CD4-positive, alpha-beta memory T cell (primary cell): ENCODE measurements at regions of chr2 and their contacts with region 1.

Region 1: DNA sequence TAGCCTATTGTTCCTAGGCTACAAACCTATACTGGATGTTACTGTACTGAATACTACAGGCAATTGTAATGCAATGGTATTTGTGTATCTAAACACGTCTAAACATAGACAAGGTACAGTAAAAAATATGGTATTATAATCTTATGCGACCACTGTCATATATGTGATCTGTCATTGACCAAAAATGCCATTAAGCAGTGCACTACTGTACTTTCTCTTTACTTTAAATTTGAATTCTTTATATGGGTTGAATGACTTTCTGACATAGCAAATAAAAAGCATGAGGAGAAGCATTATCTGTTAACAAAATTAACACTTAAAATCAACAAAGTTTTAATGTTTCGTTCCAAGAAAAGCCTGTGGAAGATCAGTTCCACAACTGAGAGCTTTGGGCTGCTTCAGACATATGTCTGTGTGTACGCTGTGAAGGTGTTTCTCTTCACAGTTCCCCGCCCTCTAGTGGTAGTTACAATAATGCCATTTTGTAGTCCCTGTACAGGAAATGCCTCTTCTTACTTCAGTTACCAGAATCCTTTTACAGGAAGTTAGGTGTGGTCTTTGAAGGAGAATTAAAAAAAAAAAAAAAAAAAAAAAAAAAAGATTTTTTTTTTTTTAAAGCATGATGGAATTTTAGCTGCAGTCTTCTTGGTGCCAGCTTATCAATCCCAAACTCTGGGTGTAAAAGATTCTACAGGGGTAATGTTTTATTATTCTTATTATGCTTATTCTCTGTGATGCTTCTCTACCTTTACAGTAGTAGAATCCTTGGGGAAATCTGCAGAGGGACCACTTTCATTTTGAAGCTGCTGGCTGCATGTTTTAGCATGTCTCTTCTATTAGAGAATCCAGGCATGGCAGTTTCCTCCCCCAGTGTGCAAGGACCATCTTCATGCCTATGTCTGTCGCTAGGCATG is 54.5 kb downstream of the SCN2A start:
- DNase-seq: peak; percentile 68 to 83 (median 75)
- H3K4me3 ChIP-seq: no peak overlapping the region
- H3K4me3 Mint-ChIP-seq: peak overlapping the region in 1 of 8 donors; percentile 11
- H3K27ac ChIP-seq: no peak overlapping the region
- H3K27ac Mint-ChIP-seq: peak overlapping the region in 2 of 7 donors; percentile 30 to 83
- H3K4me1 ChIP-seq: peaks cover 4% of the 10 kb centered on the region
- H3K4me1 Mint-ChIP-seq: peaks cover 0 to 4% (median 2%) of the 10 kb centered on the region in 4 donors
- H3K27me3 ChIP-seq: no peaks in the 10 kb centered on the region
- H3K27me3 Mint-ChIP-seq: peaks cover 6 to 7% of the 10 kb centered on the region in 2 donors

Region 2: DNA sequence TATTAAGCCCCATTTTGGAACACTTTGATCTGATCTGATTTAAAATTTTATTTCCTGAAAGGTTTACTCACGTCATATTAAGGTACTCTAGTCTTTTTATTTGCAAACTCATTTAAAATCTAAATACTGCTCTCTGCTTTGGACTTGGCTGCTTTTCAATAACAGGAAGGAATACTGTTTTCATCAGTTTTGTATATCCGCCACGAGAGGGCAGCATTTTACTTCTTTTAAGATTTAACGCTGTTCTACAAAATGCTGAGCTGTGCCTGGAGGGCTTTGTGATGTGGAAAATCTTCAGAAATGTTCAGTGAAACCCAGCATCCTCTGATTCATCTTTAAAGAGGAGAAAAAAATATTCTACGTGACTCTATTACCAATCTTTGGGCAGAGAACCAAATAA is 300.9 kb before region 1 on chr2:
- CTCF ChIA-PET with region 1: interaction called, 3 read pairs
- POLR2A ChIA-PET with region 1: no interaction called
- intact Hi-C with region 1: loop called (anchors 2 kb)
- DNase-seq: peak; percentile 31 to 44 (median 33)
- H3K4me3 ChIP-seq: no peak overlapping the region
- H3K4me3 Mint-ChIP-seq: no peak overlapping the region
- H3K27ac ChIP-seq: no peak overlapping the region
- H3K27ac Mint-ChIP-seq: no peak overlapping the region
- H3K4me1 ChIP-seq: no peaks in the 10 kb centered on the region
- H3K4me1 Mint-ChIP-seq: peaks cover 0 to 15% (median 5%) of the 10 kb centered on the region in 4 donors
- H3K27me3 ChIP-seq: no peaks in the 10 kb centered on the region
- H3K27me3 Mint-ChIP-seq: peaks cover 0 to 2% of the 10 kb centered on the region in 2 donors

Region 3: DNA sequence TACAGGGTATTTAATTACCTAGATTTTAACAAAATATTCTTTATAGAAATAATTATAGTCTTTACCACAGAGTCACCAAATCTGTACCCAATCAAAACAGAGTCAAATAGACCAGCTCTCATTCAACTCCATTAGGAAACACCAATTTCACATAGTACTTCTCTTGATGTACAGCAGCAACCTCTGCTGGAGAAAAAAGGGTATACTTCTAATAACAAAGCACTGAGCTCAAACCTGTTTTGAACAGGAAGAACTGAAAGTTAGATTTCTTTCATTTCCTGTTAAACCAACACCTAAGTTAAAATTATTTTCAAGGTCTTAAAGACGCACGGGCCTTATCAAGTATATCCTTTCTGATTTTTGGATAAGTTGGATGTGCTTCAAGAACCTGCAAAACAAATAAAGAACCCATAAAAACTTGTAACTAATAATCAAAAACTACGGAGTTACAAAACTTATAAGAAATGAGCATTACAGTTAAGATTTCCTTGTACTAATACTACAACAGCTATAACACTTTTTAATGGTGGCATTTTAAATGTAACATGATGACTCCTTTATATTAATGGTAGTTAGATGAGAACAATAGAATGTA is 580.8 kb after region 1 on chr2:
- CTCF ChIA-PET with region 1: no interaction called
- POLR2A ChIA-PET with region 1: no interaction called
- intact Hi-C with region 1: loop called (anchors 5 kb)
- DNase-seq: peak in 4 of 5 donors; percentile 51 to 62 (median 56)
- H3K4me3 ChIP-seq: no peak overlapping the region
- H3K4me3 Mint-ChIP-seq: peak overlapping the region in 3 of 8 donors; percentile 20 to 47 (median 29)
- H3K27ac ChIP-seq: no peak overlapping the region
- H3K27ac Mint-ChIP-seq: peak overlapping the region in 5 of 7 donors; percentile 5 to 79 (median 66)
- H3K4me1 ChIP-seq: peaks cover 14% of the 10 kb centered on the region
- H3K4me1 Mint-ChIP-seq: peaks cover 4 to 20% (median 8%) of the 10 kb centered on the region in 4 donors
- H3K27me3 ChIP-seq: no peaks in the 10 kb centered on the region
- H3K27me3 Mint-ChIP-seq: no peaks in the 10 kb centered on the region